Heart left ventricle (tissue), 16 donors: ENCODE measurements at regions of chr3 and their contacts with region 1.

Region 1: GRCh38 chr3:195909644-195910508 is 1.5 kb upstream of the TNK2 start:
- DNase-seq: peak; percentile 86 to 94 (median 89)
- ATAC-seq: peak; percentile 81 to 90 (median 86)
- H3K4me3 ChIP-seq: peak overlapping the region; percentile 36 to 90 (median 68)
- H3K27ac ChIP-seq: peak overlapping the region in 10 of 12 donors; percentile 42 to 80 (median 52)
- H3K4me1 ChIP-seq: peaks cover 4 to 45% (median 30%) of the 10 kb centered on the region in 12 donors
- H3K27me3 ChIP-seq: no peaks in the 10 kb centered on the region
- CTCF ChIP-seq: no peak
- POLR2A ChIP-seq: peak in 1 of 2 donors; percentile 15

Region 2: GRCh38 chr3:195850857-195851543 is 58.9 kb before region 1 on chr3:
- intact Hi-C with region 1: loop called in 1 of 10 experiments (anchors 5 kb)
- DNase-seq: peak; percentile 78 to 88 (median 84)
- ATAC-seq: peak; percentile 83 to 96 (median 93)
- H3K4me3 ChIP-seq: peak overlapping the region in 1 of 12 donors; percentile 23
- H3K27ac ChIP-seq: no peak overlapping the region
- H3K4me1 ChIP-seq: peaks cover 0 to 6% (median 2%) of the 10 kb centered on the region in 12 donors
- H3K27me3 ChIP-seq: peaks cover 0 to 4% (median 0%) of the 10 kb centered on the region in 9 donors
- CTCF ChIP-seq: peak; percentile 99 to 100 (median 100)
- POLR2A ChIP-seq: no peak

Region 3: GRCh38 chr3:195863121-195864006 is 46.5 kb before region 1 on chr3:
- intact Hi-C with region 1: loop called in 8 of 10 experiments (anchors 1 to 2 kb)
- DNase-seq: peak; percentile 87 to 94 (median 92)
- ATAC-seq: peak; percentile 93 to 98 (median 96)
- H3K4me3 ChIP-seq: no peak overlapping the region
- H3K27ac ChIP-seq: peak overlapping the region in 9 of 12 donors; percentile 33 to 70 (median 61)
- H3K4me1 ChIP-seq: peaks cover 0 to 25% (median 13%) of the 10 kb centered on the region in 12 donors
- H3K27me3 ChIP-seq: no peaks in the 10 kb centered on the region
- CTCF ChIP-seq: peak; percentile 92 to 99 (median 97)
- POLR2A ChIP-seq: no peak

Region 4: GRCh38 chr3:195894780-195895607 is 14.9 kb before region 1 on chr3:
- intact Hi-C with region 1: loop called in 3 of 10 experiments (anchors 2 kb)
- DNase-seq: peak in 3 of 5 donors; percentile 42 to 62 (median 55)
- ATAC-seq: peak in 3 of 4 donors; percentile 21 to 40 (median 33)
- H3K4me3 ChIP-seq: peak overlapping the region; percentile 47 to 81 (median 68)
- H3K27ac ChIP-seq: peak overlapping the region; percentile 74 to 96 (median 92)
- H3K4me1 ChIP-seq: peaks cover 7 to 70% (median 54%) of the 10 kb centered on the region in 12 donors
- H3K27me3 ChIP-seq: no peaks in the 10 kb centered on the region
- CTCF ChIP-seq: peak; percentile 84 to 95 (median 92)
- POLR2A ChIP-seq: no peak

Region 5: GRCh38 chr3:196251918-196252317 is 342.0 kb after region 1 on chr3:
- intact Hi-C with region 1: no loop called
- DNase-seq: no peak
- ATAC-seq: peak in 1 of 4 donors; percentile 53
- H3K4me3 ChIP-seq: no peak overlapping the region
- H3K27ac ChIP-seq: no peak overlapping the region
- H3K4me1 ChIP-seq: no peaks in the 10 kb centered on the region
- H3K27me3 ChIP-seq: no peaks in the 10 kb centered on the region
- CTCF ChIP-seq: no peak
- POLR2A ChIP-seq: no peak

Region 6: GRCh38 chr3:196517919-196518318 is 608.0 kb after region 1 on chr3:
- intact Hi-C with region 1: no loop called
- DNase-seq: peak in 1 of 5 donors; percentile 29
- ATAC-seq: no peak
- H3K4me3 ChIP-seq: no peak overlapping the region
- H3K27ac ChIP-seq: no peak overlapping the region
- H3K4me1 ChIP-seq: peaks cover 0 to 10% (median 1%) of the 10 kb centered on the region in 12 donors
- H3K27me3 ChIP-seq: no peaks in the 10 kb centered on the region
- CTCF ChIP-seq: no peak
- POLR2A ChIP-seq: no peak

Region 7: DNA sequence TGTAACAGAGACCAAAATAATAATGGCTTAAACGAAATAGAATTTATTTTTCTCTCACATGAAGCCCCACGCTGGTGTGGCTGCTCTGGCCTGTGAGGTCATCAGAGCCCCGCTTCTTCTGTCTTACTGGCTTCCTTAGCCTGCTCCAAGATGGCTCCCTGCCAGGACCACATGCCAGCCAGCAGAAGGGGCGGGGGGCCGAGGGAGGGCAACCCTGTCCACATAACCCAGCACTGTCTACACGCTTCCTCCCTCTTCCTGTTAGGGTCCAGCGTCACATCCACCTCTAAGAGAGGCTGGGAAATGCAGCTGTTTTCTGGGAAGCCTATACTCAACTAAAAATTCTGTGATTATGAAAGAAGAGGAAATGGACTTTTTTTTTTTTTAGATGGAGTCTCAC is 1496.4 kb after region 1 on chr3:
- intact Hi-C with region 1: no loop called
- DNase-seq: peak in 4 of 5 donors; percentile 30 to 56 (median 43)
- ATAC-seq: peak in 3 of 4 donors; percentile 69 to 81 (median 77)
- H3K4me3 ChIP-seq: no peak overlapping the region
- H3K27ac ChIP-seq: no peak overlapping the region
- H3K4me1 ChIP-seq: peaks cover 0 to 6% (median 4%) of the 10 kb centered on the region in 12 donors
- H3K27me3 ChIP-seq: no peaks in the 10 kb centered on the region
- CTCF ChIP-seq: no peak
- POLR2A ChIP-seq: no peak